Activated T-helper 2 cell treated with anti-CD3 and anti-CD28 coated beads, Interferon-gamma antibody, Interleukin-2, Interleukin-4, amounts not matched to agents 10 μg/mL and 5 μg/mL and 100 μg/mL, durations not matched to agents 14 hours and 24 hours and 36 hours (primary cell): ENCODE measurements at regions of chr19 and their contacts with region 1.

Region 1: DNA sequence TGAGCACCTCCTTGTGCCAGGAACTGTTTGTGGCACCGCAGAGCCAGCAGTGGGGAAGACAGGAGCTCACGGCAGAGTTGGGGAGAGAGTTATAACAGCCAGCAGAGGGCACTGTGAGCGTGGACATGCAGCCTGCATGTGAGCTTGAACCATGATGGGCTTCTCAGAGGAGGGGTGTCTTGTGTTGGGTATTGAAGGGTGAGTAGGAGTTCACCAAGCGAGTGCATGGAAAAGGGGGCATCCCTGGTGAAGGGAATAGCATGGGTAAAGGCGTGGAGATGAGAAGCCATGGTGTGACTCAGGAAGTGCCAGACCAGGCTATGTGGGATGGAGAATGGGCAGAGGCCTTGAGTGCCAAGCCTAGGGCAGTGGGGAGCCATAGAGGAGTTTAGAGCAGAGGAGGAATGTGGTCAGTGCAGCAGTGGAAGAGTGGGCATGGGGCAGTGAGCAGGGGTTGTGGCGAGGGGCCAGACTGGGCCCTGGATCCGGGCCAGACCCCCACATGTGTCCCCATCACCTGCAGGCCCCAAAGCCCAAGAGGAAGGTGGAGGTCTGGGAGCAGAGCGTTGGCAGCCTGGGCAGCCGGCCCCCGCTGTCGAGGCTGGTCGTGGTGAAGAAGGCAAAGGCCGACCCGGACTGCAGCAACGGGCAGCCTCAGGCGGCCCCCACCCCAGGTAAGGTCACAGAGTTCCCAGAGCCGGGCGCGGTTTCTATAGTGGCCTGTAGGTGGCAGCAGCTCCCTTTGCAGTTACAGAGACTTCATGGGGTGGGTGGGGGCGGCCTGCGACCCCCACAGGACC is 11.8 kb upstream of the SHD start:
- DNase-seq: peak; percentile 49
- H3K4me3 Mint-ChIP-seq: no peak overlapping the region
- H3K27ac Mint-ChIP-seq: peak overlapping the region; percentile 10
- H3K4me1 Mint-ChIP-seq: peaks cover 3% of the 10 kb centered on the region
- H3K27me3 Mint-ChIP-seq: no peaks in the 10 kb centered on the region

Region 2: GRCh38 chr19:4352701-4353121 is 85.4 kb after region 1 on chr19:
- intact Hi-C with region 1: loop called (anchors 1 kb)
- DNase-seq: no peak
- H3K4me3 Mint-ChIP-seq: no peak overlapping the region
- H3K27ac Mint-ChIP-seq: no peak overlapping the region
- H3K4me1 Mint-ChIP-seq: no peaks in the 10 kb centered on the region
- H3K27me3 Mint-ChIP-seq: no peaks in the 10 kb centered on the region

Region 3: DNA sequence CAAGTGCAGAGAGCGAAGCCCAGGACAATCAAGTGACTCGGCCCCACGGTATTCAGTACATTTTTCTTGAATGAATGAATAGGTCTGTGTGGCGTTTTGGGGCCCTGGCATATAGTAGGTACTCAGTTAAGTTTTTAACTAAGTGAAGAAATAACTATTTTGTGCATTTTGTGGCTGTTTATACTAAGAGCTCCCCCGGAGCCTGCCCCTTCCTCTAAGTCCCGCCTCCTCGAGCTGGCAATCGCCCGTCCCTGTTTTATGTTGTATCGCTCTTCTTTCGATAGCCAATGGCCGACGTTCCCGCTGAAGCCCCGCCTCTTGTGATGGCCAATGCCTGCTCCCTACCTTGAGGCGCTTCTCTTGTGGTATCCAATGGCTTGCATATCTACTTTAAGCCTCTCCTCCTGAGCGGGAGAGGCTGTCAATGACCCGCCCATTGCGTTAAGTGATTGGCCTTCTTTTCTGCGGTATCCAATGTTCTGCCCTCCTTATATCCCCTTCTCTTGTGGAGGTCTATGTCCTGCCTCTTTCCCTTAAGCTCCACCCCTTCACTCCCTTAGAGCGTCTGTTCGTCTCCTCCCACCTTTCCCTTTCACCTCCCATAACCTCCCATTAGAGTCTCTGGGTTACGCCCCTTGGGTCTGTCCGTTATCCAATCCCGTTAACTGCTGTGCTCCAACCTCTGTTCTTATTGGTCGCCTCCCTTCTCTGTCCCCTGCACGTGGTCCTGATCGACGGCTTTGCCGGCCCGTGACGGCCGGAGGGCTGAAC is 204.3 kb after region 1 on chr19:
- intact Hi-C with region 1: no loop called
- DNase-seq: peak; percentile 99
- H3K4me3 Mint-ChIP-seq: no peak overlapping the region
- H3K27ac Mint-ChIP-seq: no peak overlapping the region
- H3K4me1 Mint-ChIP-seq: peaks cover 18% of the 10 kb centered on the region
- H3K27me3 Mint-ChIP-seq: no peaks in the 10 kb centered on the region